ENCODE measurements at regions of chr3 and their contacts with region 1.

Region 1: GRCh38 chr3:71725279-71725991 is at the start of gene EIF4E3:
- DNase-seq: peak in 8 of 14 experiments; percentile 19 to 81 (median 53)
- ATAC-seq: peak; percentile 21
- H3K4me3 ChIP-seq: peak within 1 kb of the TSS; percentile 90
- H3K4me3 Mint-ChIP-seq: peak within 1 kb of the TSS; percentile 89
- H3K27ac ChIP-seq: peak within 1 kb of the TSS; percentile 63 to 84
- H3K27ac Mint-ChIP-seq: peak within 1 kb of the TSS; percentile 91
- H3K4me1 ChIP-seq: peaks cover 62% of the 10 kb centered on the region
- H3K4me1 Mint-ChIP-seq: peaks cover 77% of the 10 kb centered on the region
- H3K27me3 ChIP-seq: no peaks in the 10 kb centered on the region
- H3K27me3 Mint-ChIP-seq: no peaks in the 10 kb centered on the region
- CTCF ChIP-seq: no peak
- total RNA-seq, gene EIF4E3: 48.2 to 50.4 TPM

Region 2: GRCh38 chr3:71142440-71143161 is 582.8 kb before region 1 on chr3:
- CTCF ChIA-PET with region 1: no interaction called
- POLR2A ChIA-PET with region 1: no interaction called
- intact Hi-C with region 1: no loop called
- DNase-seq: peak in 2 of 14 experiments; percentile 30 to 31
- ATAC-seq: peak; percentile 74
- H3K4me3 ChIP-seq: no peak overlapping the region
- H3K4me3 Mint-ChIP-seq: no peak overlapping the region
- H3K27ac ChIP-seq: no peak overlapping the region
- H3K27ac Mint-ChIP-seq: peak overlapping the region; percentile 78
- H3K4me1 ChIP-seq: peaks cover 4% of the 10 kb centered on the region
- H3K4me1 Mint-ChIP-seq: peaks cover 83% of the 10 kb centered on the region
- H3K27me3 ChIP-seq: no peaks in the 10 kb centered on the region
- H3K27me3 Mint-ChIP-seq: no peaks in the 10 kb centered on the region
- CTCF ChIP-seq: no peak

Region 3: GRCh38 chr3:71702131-71703024 is 23.1 kb before region 1 on chr3:
- CTCF ChIA-PET with region 1: interaction called, 7 read pairs
- POLR2A ChIA-PET with region 1: interaction called, 5 read pairs
- intact Hi-C with region 1: loop called in 1 of 2 experiments (anchors 2 kb)
- DNase-seq: peak in 5 of 14 experiments; percentile 28 to 79 (median 67)
- ATAC-seq: peak; percentile 89
- H3K4me3 ChIP-seq: no peak overlapping the region
- H3K4me3 Mint-ChIP-seq: peak overlapping the region; percentile 72
- H3K27ac ChIP-seq: peak overlapping the region; percentile 49 to 51
- H3K27ac Mint-ChIP-seq: peak overlapping the region; percentile 85
- H3K4me1 ChIP-seq: peaks cover 42% of the 10 kb centered on the region
- H3K4me1 Mint-ChIP-seq: peaks cover 78% of the 10 kb centered on the region
- H3K27me3 ChIP-seq: no peaks in the 10 kb centered on the region
- H3K27me3 Mint-ChIP-seq: no peaks in the 10 kb centered on the region
- CTCF ChIP-seq: no peak

Region 4: DNA sequence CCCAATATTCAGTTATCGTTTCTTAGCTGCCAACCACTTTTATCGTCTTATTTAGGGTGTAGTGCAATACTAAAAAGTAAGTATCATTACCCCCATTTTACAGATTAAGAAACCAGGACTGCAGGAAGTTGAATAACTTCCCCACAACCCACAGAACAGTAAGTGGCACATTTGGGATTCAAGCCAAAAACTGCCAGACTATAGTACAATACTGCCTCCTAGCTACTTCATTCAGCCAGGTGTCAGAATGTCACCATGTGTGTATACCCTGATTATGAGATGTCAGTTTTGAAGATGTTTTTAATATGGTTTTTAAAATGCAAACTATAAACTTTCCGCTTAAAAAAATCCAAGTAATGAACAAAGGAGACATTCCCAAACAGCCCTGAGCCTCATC is 133.7 kb after region 1 on chr3:
- CTCF ChIA-PET with region 1: interaction called, 3 read pairs
- POLR2A ChIA-PET with region 1: interaction called, 3 read pairs
- intact Hi-C with region 1: loop called (anchors 1 to 5 kb)
- DNase-seq: peak in 5 of 14 experiments; percentile 8 to 79 (median 73)
- ATAC-seq: peak; percentile 82
- H3K4me3 ChIP-seq: no peak overlapping the region
- H3K4me3 Mint-ChIP-seq: no peak overlapping the region
- H3K27ac ChIP-seq: no peak overlapping the region
- H3K27ac Mint-ChIP-seq: no peak overlapping the region
- H3K4me1 ChIP-seq: peaks cover 5% of the 10 kb centered on the region
- H3K4me1 Mint-ChIP-seq: peaks cover 6% of the 10 kb centered on the region
- H3K27me3 ChIP-seq: peaks cover 0 to 7% of the 10 kb centered on the region in 2 experiments
- H3K27me3 Mint-ChIP-seq: peaks cover 25% of the 10 kb centered on the region
- CTCF ChIP-seq: peak; percentile 66

Region 5: DNA sequence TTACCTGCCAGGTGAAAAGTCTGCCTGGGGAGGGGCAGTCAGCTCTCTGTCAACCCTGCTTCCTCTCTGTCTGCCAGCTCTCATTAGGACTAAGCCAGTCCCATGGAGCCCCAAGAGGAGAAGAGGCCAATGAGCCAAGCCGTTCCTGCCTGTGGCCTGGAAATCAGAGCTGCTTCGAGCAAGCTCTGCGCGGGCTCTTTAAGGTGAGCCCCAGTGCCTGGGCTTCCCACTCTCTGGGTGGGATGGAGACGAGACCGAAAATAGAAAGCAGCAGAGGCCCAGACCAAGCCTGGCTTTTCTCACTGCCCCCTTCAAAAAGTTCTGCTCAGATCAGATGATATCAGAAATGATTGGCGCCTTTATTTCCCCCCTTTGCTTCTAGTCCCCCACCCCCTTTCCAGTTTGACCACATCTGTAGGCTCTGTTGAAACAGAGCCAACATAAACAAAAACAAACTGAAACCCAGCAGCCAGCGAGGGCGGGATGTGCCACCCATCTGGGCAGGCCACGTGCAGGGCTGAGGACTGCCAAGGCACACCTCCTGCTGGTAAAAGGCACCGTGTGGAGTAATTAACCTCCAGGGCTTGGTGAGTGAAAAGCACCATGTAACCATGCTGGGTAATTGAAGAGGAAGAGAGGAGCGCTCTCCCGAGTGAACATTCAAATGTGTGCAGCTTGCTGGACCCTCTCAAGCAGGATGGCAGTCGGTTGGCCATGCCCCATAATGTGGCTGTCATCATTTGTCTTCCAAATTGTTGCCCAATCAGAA is 530.5 kb after region 1 on chr3:
- CTCF ChIA-PET with region 1: no interaction called
- POLR2A ChIA-PET with region 1: no interaction called
- intact Hi-C with region 1: loop called in 1 of 2 experiments (anchors 10 kb)
- DNase-seq: peak; percentile 8 to 67 (median 21)
- ATAC-seq: peak; percentile 85
- H3K4me3 ChIP-seq: no peak overlapping the region
- H3K4me3 Mint-ChIP-seq: peak overlapping the region; percentile 62
- H3K27ac ChIP-seq: no peak overlapping the region
- H3K27ac Mint-ChIP-seq: peak overlapping the region; percentile 73
- H3K4me1 ChIP-seq: peaks cover 44% of the 10 kb centered on the region
- H3K4me1 Mint-ChIP-seq: peaks cover 50% of the 10 kb centered on the region
- H3K27me3 ChIP-seq: no peaks in the 10 kb centered on the region
- H3K27me3 Mint-ChIP-seq: no peaks in the 10 kb centered on the region
- CTCF ChIP-seq: no peak

Region 6: DNA sequence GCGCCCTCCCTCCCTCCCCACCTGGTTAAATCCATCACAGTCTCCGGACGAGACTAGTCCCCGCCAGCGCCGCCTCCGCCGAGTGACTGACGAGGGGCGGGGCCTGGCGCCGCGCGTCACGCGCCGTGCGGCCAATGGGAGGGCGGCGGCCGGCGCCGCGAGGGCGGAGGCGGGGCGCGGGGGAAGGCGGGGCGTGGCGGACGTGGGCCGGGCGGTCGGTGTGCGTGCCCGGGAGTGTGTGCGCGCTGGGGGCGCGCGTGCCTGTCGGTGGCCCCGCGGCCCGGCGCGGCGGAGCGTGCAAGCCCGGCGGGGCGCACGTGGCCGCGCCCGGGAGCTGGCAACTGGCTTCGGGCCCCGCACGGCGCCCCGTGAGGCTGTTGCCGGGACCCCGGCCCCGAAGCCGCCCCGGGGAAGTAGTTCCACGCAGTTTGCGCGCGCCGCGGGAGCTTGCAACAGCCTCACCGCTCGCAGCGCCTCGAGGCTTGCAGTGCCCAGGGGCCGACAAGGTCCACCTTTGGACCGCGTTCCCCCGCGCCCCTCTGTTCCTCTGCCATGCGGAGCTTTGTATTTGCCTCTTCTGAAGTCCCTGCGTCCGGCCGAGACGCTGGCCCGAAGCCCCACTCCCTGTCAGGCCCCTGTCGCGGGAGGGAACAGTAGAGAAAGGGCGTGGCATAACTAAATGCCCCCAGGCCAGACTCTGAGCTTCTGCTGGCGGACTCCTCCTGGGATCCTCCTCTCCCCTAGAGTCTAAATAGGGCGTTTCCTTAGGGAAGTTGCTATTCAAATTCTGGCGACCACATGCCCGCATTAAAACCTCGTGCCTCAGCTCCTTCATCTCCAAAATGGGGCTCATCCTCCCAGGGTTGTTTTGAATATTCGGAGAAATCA is 721.9 kb after region 1 on chr3:
- CTCF ChIA-PET with region 1: no interaction called
- POLR2A ChIA-PET with region 1: no interaction called
- intact Hi-C with region 1: loop called in 1 of 2 experiments (anchors 5 kb)
- DNase-seq: peak; percentile 86 to 98 (median 93)
- ATAC-seq: peak; percentile 89
- H3K4me3 ChIP-seq: peak overlapping the region; percentile 69
- H3K4me3 Mint-ChIP-seq: peak overlapping the region; percentile 85
- H3K27ac ChIP-seq: peak overlapping the region in 1 of 2 donors; percentile 55
- H3K27ac Mint-ChIP-seq: peak overlapping the region; percentile 74
- H3K4me1 ChIP-seq: peaks cover 16% of the 10 kb centered on the region
- H3K4me1 Mint-ChIP-seq: peaks cover 43% of the 10 kb centered on the region
- H3K27me3 ChIP-seq: no peaks in the 10 kb centered on the region
- H3K27me3 Mint-ChIP-seq: no peaks in the 10 kb centered on the region
- CTCF ChIP-seq: peak; percentile 13